ENCODE measurements at regions of chr3 and their contacts with region 1.

Region 1: DNA sequence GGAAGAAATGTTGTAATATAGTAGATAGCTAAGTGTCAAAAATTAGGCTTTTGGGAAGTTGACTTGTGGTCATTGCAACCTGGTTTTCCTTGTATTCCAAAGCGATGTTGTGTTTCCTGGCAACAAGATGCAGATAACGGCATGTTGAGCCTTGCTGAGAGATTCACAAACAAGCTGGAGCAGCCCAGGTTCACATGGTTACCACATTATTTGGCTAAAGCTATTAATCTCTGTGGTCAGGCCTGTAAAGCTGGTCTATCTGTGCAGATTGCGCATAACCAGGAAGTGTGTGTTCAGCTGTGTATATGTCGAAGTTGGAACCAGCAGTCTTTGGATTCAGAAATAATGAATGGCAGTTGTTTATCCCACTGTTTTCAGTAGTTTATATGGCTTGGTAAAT is 6.6 kb downstream of the TIPARP start:
- DNase-seq: no peak
- ATAC-seq: peak; percentile 57
- H3K4me3 ChIP-seq: no peak overlapping the region
- H3K4me3 Mint-ChIP-seq: peak overlapping the region in 7 of 10 donors; percentile 19 to 81 (median 54)
- H3K27ac ChIP-seq: no peak overlapping the region
- H3K27ac Mint-ChIP-seq: peak overlapping the region in 1 of 9 donors; percentile 50
- H3K4me1 ChIP-seq: peaks cover 51 to 55% of the 10 kb centered on the region in 2 donors
- H3K4me1 Mint-ChIP-seq: peaks cover 58 to 92% (median 89%) of the 10 kb centered on the region in 7 donors
- H3K27me3 ChIP-seq: no peaks in the 10 kb centered on the region
- H3K27me3 Mint-ChIP-seq: no peaks in the 10 kb centered on the region

Region 2: DNA sequence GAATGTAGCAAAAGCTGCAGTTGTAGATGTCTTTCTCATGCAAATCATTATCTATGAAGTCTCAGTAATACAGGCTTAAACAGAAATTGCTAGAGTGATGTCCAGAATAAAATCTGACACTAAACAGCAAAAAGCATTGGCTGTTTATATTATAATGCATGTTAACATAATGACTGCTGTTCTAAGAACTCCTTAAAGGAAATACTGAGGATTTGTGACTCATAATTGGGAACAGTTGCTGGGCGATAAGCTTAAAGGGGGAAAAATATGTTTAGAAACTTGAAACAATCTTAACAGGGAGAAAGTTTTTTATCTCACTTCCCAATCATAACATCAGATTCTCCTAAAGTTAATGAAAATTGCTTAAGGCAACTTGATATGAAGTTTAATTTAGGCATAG is 10.9 kb after region 1 on chr3:
- CTCF ChIA-PET with region 1: interaction called, 3 read pairs
- POLR2A ChIA-PET with region 1: interaction called, 16 read pairs
- intact Hi-C with region 1: loop called (anchors 1 kb)
- DNase-seq: no peak
- ATAC-seq: no peak
- H3K4me3 ChIP-seq: no peak overlapping the region
- H3K4me3 Mint-ChIP-seq: no peak overlapping the region
- H3K27ac ChIP-seq: no peak overlapping the region
- H3K27ac Mint-ChIP-seq: peak overlapping the region in 1 of 9 donors; percentile 33
- H3K4me1 ChIP-seq: peaks cover 0 to 20% of the 10 kb centered on the region in 2 donors
- H3K4me1 Mint-ChIP-seq: peaks cover 35 to 61% (median 42%) of the 10 kb centered on the region in 7 donors
- H3K27me3 ChIP-seq: no peaks in the 10 kb centered on the region
- H3K27me3 Mint-ChIP-seq: no peaks in the 10 kb centered on the region

Region 3: DNA sequence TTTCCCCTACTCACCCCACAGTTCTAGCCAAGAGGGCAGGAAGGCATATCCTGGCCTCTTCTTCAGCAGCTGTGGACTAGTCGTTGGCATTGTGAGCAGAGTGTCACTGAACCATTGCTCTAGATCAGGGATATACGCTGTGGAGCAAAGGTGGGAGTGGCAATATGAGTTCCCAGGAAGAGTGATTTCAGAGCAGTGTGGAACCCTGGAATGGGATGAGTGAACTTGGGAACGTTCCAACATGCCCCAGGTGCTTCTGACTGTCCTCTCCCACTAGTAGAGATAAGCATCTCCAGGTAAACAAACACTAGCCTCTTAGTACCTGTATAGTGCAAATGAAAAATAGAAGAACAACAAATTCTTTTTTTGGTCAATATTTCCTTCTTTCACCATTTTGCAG is 945.8 kb after region 1 on chr3:
- CTCF ChIA-PET with region 1: no interaction called
- POLR2A ChIA-PET with region 1: no interaction called
- intact Hi-C with region 1: no loop called
- DNase-seq: no peak
- ATAC-seq: no peak
- H3K4me3 ChIP-seq: no peak overlapping the region
- H3K4me3 Mint-ChIP-seq: no peak overlapping the region
- H3K27ac ChIP-seq: no peak overlapping the region
- H3K27ac Mint-ChIP-seq: no peak overlapping the region
- H3K4me1 ChIP-seq: no peaks in the 10 kb centered on the region
- H3K4me1 Mint-ChIP-seq: no peaks in the 10 kb centered on the region
- H3K27me3 ChIP-seq: no peaks in the 10 kb centered on the region
- H3K27me3 Mint-ChIP-seq: peaks cover 2 to 76% (median 20%) of the 10 kb centered on the region in 5 donors

Measured in naive thymus-derived CD4-positive, alpha-beta T cell (primary cell).